ENCODE measurements at regions of chr1 and their contacts with region 1.

Region 1: DNA sequence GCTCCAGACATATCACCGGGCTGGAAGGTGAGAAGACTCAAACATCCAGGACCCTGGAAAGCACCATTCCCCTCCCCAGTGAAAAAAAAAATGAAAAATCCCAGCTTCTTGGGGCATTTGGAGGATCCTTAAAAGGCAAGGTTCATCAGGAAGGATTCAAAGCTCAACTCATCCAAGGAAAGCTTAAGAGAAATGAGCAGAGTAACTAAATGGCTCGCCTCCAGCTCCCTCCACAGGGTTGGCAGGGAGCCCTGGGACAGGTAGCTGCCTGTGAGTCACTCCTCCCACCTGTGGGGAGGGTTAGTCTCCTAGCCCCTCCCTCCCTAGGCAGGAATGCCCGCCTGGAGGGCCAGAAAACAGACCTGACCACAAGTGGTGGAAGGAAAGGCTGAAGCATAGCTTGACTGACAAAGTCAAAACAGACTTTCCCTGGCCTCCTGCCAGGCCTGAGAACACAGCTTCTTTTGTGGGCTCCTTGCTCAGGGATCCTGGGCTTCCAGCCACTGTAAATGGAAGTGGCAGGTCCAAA is 712 bp upstream of the LAMB3 start:
- DNase-seq: peak; percentile 100
- ATAC-seq: peak; percentile 28
- H3K4me3 ChIP-seq: peak overlapping the region; percentile 82
- H3K27ac ChIP-seq: peak overlapping the region; percentile 95
- H3K4me1 ChIP-seq: peaks cover 81% of the 10 kb centered on the region
- H3K27me3 ChIP-seq: no peaks in the 10 kb centered on the region
- CTCF ChIP-seq: no peak

Region 2: DNA sequence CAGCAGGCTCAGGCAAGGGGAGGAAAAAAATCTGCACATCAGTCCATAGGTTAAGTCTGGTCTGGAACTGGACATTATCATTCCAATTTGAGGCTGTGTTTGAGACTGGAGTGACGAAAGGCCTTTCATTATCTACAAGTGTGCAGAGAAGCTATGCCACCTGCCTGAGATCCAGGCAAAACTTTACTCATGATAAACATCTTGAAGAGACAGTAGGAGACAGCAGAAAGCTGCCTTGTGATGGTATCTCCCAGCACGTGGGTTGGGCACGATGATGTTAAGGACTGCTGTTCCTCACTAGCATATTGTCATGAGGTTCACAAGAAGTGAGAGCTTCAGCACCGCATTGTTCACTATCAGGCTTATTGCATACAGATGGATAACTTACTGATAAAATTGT is 1535.1 kb before region 1 on chr1:
- CTCF ChIA-PET with region 1: interaction called, 20 read pairs
- POLR2A ChIA-PET with region 1: no interaction called
- intact Hi-C with region 1: no loop called
- DNase-seq: no peak
- ATAC-seq: no peak
- H3K4me3 ChIP-seq: no peak overlapping the region
- H3K27ac ChIP-seq: no peak overlapping the region
- H3K4me1 ChIP-seq: peaks cover 16% of the 10 kb centered on the region
- H3K27me3 ChIP-seq: no peaks in the 10 kb centered on the region
- CTCF ChIP-seq: no peak

Region 3: DNA sequence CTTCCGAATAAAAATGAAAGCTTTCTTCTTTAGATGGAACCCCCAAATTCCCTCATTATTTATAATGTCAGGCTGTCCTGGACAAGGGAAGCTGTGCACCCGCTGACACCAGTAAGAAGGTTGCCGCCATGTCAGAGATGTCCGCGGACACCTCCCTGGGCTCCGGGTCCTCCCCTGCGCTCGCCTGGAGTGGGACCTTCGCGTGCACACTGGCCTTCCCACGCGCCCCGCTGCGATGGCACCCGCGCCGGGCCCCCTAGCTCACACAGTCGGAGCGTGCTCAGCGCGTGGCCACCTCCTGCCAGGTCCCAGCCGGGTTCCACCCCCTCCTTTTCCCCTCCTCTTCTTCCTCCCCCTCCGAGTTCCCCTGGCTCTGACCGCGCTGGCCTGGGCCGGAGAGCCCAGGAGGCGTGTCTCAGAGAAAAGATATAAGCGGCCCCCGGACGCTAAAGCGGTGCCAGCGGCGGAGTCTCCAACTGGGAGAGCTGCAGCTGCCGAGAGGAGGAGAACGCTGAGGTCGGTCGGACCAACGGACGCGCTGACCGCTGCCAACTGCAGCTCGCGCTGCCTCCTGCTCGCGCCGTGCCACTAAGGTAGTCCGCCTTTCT is 22.1 kb after region 1 on chr1 and contains the start of gene G0S2:
- CTCF ChIA-PET with region 1: interaction called, 3 read pairs
- POLR2A ChIA-PET with region 1: interaction called, 19 read pairs
- intact Hi-C with region 1: no loop called
- DNase-seq: peak; percentile 96
- ATAC-seq: peak; percentile 75
- H3K4me3 ChIP-seq: peak within 1 kb of the TSS; percentile 71
- H3K27ac ChIP-seq: 0 out of 2 replicates have a peak within 1 kb of the TSS, but pooled peaks have one; percentile 0
- H3K4me1 ChIP-seq: peaks cover 55% of the 10 kb centered on the region
- H3K27me3 ChIP-seq: no peaks in the 10 kb centered on the region
- CTCF ChIP-seq: no peak
- total RNA-seq, gene G0S2: 620 and 723 TPM in 2 replicates

Region 4: DNA sequence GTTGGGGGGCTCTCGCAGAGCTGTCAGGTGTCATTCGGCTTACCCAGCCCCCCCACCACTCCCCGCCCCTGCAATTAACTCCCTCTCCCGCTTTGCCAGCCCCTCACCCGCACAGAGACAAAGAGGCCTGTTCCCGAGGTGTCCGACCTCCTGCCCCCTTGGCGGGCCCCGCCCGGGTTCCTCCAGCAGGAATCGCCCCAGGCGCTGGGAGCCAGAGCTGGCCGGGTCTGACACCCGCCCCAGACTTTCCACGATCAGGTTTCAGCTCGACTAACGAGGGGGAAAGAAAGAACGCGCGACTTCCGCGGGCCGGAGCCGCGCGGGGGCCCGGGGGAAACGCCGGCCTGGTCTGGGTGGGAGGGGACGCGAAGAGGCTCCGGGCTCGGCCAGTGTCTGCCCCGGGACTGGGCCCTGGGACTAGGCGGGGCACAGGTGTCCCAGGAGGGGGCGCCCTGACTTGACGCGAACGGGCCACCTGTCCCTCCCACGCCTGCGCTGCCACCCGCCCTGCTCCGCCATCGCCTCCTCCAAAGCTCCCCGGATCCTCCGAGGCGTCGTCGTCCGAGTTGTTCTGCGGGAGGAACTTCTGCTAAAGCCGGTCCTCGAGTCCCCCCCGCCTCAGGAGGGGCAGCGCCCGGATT is 639.4 kb after region 1 on chr1:
- CTCF ChIA-PET with region 1: no interaction called
- POLR2A ChIA-PET with region 1: no interaction called
- intact Hi-C with region 1: no loop called
- DNase-seq: peak; percentile 57
- ATAC-seq: peak; percentile 86
- H3K4me3 ChIP-seq: peak overlapping the region; percentile 69
- H3K27ac ChIP-seq: no peak overlapping the region
- H3K4me1 ChIP-seq: peaks cover 12% of the 10 kb centered on the region
- H3K27me3 ChIP-seq: no peaks in the 10 kb centered on the region
- CTCF ChIP-seq: peak; percentile 70

Measured in PC-3 (cell line).